ENCODE measurements at regions of chr17 and their contacts with region 1.

Region 1: DNA sequence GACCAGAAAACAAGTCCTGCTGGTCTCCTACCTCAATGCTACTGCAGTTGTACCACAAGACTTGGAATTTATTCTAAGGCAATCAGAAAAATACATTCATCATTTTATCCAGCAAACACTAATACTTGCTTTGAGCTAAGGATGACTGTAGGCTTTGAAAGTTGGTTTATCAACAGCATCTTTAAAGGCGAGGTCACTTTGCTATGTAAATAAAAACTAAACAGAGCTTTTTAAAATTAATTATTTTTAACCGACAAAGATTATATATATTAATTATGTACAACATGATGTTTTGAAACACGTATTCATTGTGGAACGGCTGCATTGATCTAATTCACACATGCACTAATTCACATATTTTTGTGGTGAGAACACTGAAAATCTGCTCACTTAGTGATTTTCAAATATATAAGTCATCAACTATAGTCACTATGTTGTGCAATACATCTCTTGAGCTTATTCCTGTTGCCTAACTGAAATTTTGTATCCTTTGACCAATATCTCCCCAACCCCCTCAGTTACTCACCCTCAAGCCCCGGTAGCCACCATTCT is 125.9 kb upstream of the HS3ST3A1 start:
- DNase-seq: no peak
- ATAC-seq: no peak
- H3K4me3 ChIP-seq: no peak overlapping the region
- H3K27ac ChIP-seq: no peak overlapping the region
- H3K4me1 ChIP-seq: no peaks in the 10 kb centered on the region
- H3K27me3 ChIP-seq: no peaks in the 10 kb centered on the region
- CTCF ChIP-seq: no peak

Region 2: DNA sequence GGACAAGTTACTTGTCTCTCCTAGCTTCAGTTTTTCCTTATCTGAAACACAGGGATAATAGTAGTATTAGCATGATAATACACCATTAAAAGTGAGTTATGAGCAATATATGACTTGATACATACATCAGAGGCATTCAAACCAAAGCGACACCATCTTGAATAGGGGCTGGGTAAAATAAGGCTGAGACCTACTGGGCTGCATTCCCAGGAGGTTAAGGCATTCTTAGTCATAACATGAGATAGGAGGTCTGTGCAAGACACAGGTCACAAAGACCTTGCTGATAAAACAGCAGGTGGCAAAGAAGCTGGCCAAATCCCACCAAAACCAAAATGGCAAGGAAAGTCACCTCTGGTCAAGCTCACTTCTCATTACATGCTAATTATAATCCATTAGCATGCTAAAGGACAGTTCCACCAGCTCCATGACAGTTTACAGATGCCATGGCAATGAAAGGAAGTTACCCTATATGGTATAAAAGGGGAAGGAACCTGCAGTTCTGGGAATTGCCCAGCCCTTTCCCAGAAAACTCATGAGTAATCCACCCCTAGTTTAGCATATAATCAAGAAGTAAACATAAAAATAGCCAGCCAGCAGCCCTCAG is 88.7 kb before region 1 on chr17:
- intact Hi-C with region 1: no loop called
- DNase-seq: peak in 1 of 2 donors; percentile 16
- ATAC-seq: peak in 3 of 8 donors; percentile 25 to 64 (median 28)
- H3K4me3 ChIP-seq: no peak overlapping the region
- H3K27ac ChIP-seq: no peak overlapping the region
- H3K4me1 ChIP-seq: peaks cover 0 to 11% (median 0%) of the 10 kb centered on the region in 9 donors
- H3K27me3 ChIP-seq: no peaks in the 10 kb centered on the region
- CTCF ChIP-seq: no peak

Region 3: GRCh38 chr17:13740686-13741085 is 13.1 kb after region 1 on chr17:
- intact Hi-C with region 1: no loop called
- DNase-seq: no peak
- ATAC-seq: no peak
- H3K4me3 ChIP-seq: no peak overlapping the region
- H3K27ac ChIP-seq: no peak overlapping the region
- H3K4me1 ChIP-seq: no peaks in the 10 kb centered on the region
- H3K27me3 ChIP-seq: no peaks in the 10 kb centered on the region
- CTCF ChIP-seq: no peak

Region 4: DNA sequence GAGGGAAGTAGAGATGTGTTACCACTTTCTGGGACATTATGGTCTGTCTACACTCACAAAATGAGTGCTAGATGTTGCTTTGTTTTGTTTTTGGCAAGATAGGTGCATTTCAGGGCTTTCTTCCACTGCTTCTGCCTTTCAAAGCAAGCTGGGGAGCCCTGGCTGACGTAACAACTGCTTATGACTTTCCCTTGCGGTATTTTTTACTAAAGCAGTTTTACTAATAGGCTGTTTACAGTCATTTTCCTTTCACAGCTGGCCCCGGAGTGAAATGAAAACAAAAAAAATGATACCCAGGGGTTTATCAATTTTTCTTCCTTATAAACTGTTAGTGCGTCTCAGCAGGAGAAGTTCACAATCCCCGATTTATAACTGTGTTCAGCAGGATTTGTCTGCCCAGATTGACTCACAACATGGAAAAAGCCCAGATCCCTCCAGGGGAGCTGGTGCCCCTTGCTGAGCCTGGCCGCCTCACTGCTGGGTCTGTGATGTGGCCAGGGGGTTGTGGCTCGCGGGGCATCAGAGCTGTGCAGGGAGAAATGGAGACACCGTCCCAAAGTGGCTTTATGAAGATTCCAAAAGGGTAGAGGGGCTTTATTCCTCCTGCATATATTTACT is 58.5 kb after region 1 on chr17:
- intact Hi-C with region 1: loop called in 1 of 10 experiments (anchors 10 kb)
- DNase-seq: no peak
- ATAC-seq: no peak
- H3K4me3 ChIP-seq: no peak overlapping the region
- H3K27ac ChIP-seq: no peak overlapping the region
- H3K4me1 ChIP-seq: peaks cover 0 to 8% (median 0%) of the 10 kb centered on the region in 9 donors
- H3K27me3 ChIP-seq: no peaks in the 10 kb centered on the region
- CTCF ChIP-seq: no peak